Common myeloid progenitor, CD34-positive (primary cell): ENCODE measurements at regions of chr11 and their contacts with region 1.

Region 1: GRCh38 chr11:47399860-47400767 is 8.3 kb upstream of the SLC39A13 start:
- DNase-seq: peak; percentile 60 to 92 (median 88)
- H3K4me3 ChIP-seq: peak overlapping the region in 6 of 7 experiments; percentile 36 to 73 (median 56)
- H3K27ac ChIP-seq: peak overlapping the region; percentile 50 to 82
- H3K4me1 ChIP-seq: peaks cover 15 to 74% (median 68%) of the 10 kb centered on the region in 4 experiments
- H3K27me3 ChIP-seq: no peaks in the 10 kb centered on the region

Region 2: DNA sequence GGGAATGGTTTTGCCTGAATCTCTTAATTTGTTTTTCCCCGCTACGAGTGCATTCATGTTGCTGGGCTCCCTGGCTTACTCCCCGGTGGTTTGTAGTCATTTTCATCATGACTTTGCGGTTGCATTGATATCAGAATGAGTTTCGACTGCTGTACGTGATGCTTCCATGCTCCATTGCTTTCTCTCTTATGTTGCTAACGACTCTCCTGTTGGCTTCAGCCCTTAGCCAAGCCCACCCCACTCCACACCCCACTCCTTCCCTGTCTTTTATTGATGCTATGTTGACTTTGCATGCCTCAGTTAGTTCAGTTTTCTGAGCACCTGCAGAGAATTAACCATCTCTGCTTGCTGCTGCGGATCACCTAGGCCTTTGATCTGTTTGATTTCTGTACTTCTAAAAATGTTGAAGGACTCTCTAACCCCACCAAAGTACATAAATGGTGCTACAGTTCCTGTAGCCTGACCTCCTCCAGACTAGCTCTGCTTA is 288.8 kb before region 1 on chr11:
- CTCF ChIA-PET with region 1: no interaction called
- POLR2A ChIA-PET with region 1: no interaction called
- DNase-seq: no peak
- H3K4me3 ChIP-seq: no peak overlapping the region
- H3K27ac ChIP-seq: no peak overlapping the region
- H3K4me1 ChIP-seq: no peaks in the 10 kb centered on the region
- H3K27me3 ChIP-seq: no peaks in the 10 kb centered on the region

Region 3: GRCh38 chr11:47359586-47359985 is 40.5 kb before region 1 on chr11:
- CTCF ChIA-PET with region 1: interaction called, 13 read pairs
- POLR2A ChIA-PET with region 1: interaction called, 9 read pairs
- DNase-seq: peak; percentile 74 to 96 (median 94)
- H3K4me3 ChIP-seq: peak overlapping the region in 2 of 7 experiments; percentile 13 to 28
- H3K27ac ChIP-seq: peak overlapping the region; percentile 81 to 86
- H3K4me1 ChIP-seq: peaks cover 6 to 45% (median 36%) of the 10 kb centered on the region in 4 experiments
- H3K27me3 ChIP-seq: no peaks in the 10 kb centered on the region

Region 4: DNA sequence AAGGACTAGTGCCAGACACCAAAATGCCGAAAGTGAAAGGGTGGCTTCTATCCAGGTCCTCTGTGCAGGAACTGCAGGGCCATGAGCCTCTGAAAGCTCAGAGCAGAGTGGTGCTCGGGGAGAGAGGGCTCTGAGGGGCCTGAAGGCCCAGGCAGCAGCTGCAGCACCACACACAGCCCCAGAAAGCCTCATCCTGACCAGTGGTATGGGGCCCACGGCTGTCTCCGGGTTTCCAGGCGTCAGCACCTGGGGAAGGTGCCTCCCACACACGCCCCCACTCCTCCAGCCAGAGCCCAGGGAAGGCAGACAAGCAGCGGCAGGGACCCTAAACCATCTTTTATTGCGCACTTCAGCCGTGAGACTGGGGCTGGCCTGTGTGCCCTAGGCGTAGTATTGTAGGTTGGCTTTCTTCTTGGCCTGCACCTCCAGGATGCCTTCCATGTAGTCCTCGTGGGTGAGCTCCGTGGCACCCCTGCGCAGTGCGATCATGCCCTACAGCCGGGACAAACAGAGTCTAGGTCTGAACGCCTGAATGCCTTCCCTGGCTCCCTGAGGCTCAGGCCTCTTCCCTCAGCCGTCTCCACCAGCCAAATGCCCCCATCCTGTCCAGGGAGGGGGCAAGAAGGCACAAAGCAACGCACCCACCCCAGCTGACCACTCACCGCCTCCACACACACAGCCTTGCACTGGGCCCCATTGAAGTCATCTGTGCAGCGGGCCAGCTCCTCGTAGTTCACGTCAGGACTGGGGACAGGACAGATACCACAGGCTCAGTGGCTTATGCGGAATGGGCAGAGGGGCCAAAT is 18.5 kb after region 1 on chr11:
- CTCF ChIA-PET with region 1: no interaction called
- POLR2A ChIA-PET with region 1: no interaction called
- DNase-seq: no peak
- H3K4me3 ChIP-seq: no peak overlapping the region
- H3K27ac ChIP-seq: peak overlapping the region in 1 of 2 experiments; percentile 43
- H3K4me1 ChIP-seq: peaks cover 0 to 10% (median 4%) of the 10 kb centered on the region in 4 experiments
- H3K27me3 ChIP-seq: no peaks in the 10 kb centered on the region